ENCODE measurements at regions of chr22 and their contacts with region 1.

Region 1: DNA sequence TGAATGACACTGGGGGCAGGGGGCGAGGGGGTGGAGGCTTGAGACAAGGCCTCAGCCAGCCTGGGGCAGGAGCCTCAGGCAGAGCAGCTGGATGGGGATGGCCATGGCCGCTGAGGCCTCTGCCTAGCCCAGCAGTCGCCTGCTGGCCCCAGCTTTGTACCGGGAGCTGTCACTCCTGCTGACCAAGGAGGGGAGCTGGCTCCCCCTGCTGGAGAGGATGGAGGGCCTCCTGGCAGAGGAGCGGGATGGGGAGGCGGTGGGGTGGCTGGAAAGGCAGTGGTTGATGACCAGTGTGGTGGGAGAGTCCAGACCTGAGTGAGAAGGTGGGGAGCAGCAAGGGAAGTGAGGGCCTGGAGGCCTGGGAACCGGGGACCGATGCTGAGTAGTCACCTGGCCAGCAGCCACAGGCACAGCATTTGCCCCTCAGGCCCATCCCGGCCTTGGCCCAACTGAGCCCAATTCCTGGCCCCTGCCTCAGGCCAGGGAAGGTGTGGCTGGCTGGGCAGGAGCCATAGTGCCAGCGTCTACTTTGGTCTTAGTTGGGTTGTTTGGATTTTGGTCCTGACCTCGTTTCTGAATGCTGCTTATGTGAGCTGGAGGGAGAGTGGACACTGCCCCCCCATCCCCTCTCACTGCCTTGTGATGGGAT is 6.0 kb upstream of the SUSD2 start:
- DNase-seq: no peak
- ATAC-seq: peak; percentile 87
- H3K4me3 ChIP-seq: no peak overlapping the region
- H3K27ac ChIP-seq: no peak overlapping the region
- H3K4me1 ChIP-seq: no peaks in the 10 kb centered on the region
- H3K27me3 ChIP-seq: no peaks in the 10 kb centered on the region
- CTCF ChIP-seq: peak; percentile 72 to 92 (median 80)
- EP300 ChIP-seq: no peak
- POLR2A ChIP-seq: no peak
- RAD21 ChIP-seq: peak; percentile 89

Region 2: DNA sequence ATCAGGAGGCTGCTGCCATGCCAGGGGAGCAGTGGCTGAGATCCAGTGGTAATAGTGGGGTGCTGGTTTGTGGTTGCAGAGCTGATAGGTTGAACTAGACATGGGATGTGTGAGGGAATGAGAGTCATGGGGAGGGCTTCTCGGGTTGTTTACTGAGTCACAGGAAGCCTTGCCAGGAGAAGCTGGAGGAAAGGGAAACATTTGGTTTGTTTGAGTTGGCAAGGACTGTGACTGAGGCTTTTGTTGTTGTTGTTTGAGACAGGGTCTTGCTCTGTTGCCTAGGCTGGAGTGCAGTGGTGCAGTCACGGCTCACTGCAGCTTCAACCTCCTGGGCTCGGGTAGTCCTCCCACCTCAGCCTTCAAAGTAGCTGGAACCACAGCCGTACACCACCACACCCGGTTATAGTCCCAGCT is 114.9 kb before region 1 on chr22:
- CTCF ChIA-PET with region 1: interaction called, 4 read pairs
- POLR2A ChIA-PET with region 1: no interaction called
- RAD21 ChIA-PET with region 1: no interaction called
- SMC1A ChIA-PET with region 1: no interaction called
- in situ Hi-C with region 1: no loop called
- intact Hi-C with region 1: loop called (anchors 5 kb)
- DNase-seq: no peak
- ATAC-seq: no peak
- H3K4me3 ChIP-seq: no peak overlapping the region
- H3K27ac ChIP-seq: no peak overlapping the region
- H3K4me1 ChIP-seq: no peaks in the 10 kb centered on the region
- H3K27me3 ChIP-seq: no peaks in the 10 kb centered on the region
- CTCF ChIP-seq: no peak
- EP300 ChIP-seq: no peak
- POLR2A ChIP-seq: no peak
- RAD21 ChIP-seq: no peak

Region 3: DNA sequence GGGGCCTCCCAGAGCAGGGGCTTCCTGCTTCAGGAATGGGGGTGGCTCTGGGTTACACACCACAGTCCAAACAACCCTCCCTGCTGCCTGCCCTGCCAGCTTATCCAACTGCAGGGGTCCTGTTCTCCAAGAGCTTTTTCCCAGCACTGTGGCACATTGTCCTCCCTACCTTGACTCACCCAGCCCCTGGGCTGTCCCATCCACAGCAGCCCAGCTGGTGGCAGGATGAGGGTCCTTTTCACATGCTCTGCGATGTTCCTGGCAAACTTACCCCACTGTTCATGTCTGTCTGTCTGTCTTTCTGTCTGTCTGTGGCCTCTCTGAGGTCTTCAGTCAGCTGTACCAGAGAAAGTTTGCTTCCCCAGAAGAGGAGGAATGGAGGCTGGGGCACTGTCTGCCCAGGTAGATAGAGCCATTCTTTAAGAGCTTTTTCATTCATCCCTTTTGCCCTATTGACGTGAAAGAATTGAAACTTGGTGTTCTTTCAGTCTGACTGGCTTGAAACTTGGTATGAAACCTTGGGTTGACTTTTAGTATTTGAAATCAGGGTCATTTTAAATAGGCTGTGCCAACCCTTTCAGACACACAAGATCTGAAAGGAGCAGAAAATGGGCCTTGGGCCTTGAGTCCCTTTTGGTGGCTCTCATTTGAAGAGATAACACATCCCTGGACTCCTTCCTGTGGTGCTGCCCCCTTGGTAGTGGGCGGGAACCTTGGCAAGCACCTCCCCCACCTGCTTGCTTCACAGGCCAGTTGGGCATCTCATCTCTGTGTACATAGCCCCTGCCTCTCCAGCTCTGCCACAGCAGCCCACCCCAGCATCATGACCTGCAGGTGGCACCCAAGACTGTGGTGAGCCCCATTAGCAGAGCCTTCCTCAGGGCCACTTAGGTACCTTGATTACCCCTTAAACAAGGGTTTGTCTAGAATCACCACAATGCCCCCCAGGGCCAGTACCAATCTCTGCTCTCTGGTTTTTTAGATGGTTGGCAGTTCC is 68.6 kb before region 1 on chr22:
- CTCF ChIA-PET with region 1: interaction called, 16 read pairs
- POLR2A ChIA-PET with region 1: no interaction called
- RAD21 ChIA-PET with region 1: interaction called, 17 read pairs
- SMC1A ChIA-PET with region 1: interaction called, 11 read pairs
- in situ Hi-C with region 1: no loop called
- intact Hi-C with region 1: loop called (anchors 5 kb)
- DNase-seq: peak; percentile 41
- ATAC-seq: peak; percentile 90
- H3K4me3 ChIP-seq: no peak overlapping the region
- H3K27ac ChIP-seq: no peak overlapping the region; the same call in 1 of the 2 replicates
- H3K4me1 ChIP-seq: peaks cover 18% of the 10 kb centered on the region
- H3K27me3 ChIP-seq: no peaks in the 10 kb centered on the region
- CTCF ChIP-seq: peak; percentile 18 to 39 (median 37); a peak in 4 of 6 replicates
- EP300 ChIP-seq: no peak
- POLR2A ChIP-seq: no peak
- RAD21 ChIP-seq: peak; percentile 41

Region 4: DNA sequence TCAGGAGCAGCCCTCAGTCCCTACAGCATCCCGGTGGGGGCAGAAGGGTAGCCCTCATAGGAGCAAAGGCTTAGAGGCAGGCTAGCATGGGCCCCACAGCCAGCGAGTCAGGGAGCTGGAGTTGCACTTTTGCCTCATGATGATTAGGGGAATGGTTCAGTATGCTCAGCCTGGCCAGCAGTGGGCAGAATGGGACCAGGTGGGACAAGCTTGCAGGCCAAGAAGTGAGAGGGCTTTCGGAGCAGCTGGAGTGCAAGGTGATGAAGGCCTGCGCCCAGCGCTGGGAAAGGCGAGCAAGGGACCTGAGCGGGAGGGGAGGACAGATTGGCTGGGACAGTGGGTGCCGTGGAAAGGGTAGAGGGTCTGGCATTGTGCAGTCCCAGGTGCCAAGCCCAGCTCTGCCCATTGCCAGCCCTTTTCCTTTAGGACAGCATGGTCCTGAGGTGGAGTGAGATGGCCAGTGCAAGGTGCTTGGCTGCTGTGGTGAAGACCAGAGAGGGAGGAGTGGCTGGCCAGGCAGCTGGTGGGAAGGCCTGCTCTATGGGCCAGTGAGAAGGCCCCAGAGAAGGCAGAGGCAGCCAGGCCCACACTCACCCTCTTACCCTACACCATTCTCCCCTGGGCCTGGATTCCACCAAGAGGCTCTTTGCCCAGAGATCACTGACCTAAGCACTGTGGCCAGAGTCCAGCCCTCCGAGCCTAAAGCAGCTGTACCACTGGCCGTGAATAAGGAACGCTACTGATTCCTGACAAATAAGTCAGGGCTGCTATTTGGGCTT is 41.9 kb before region 1 on chr22:
- CTCF ChIA-PET with region 1: interaction called, 13 read pairs
- POLR2A ChIA-PET with region 1: no interaction called
- RAD21 ChIA-PET with region 1: interaction called, 4 read pairs
- SMC1A ChIA-PET with region 1: interaction called, 4 read pairs
- in situ Hi-C with region 1: no loop called
- intact Hi-C with region 1: loop called (anchors 2 kb)
- DNase-seq: no peak
- ATAC-seq: no peak; the same call in 2 of the 3 replicates
- H3K4me3 ChIP-seq: no peak overlapping the region
- H3K27ac ChIP-seq: no peak overlapping the region
- H3K4me1 ChIP-seq: no peaks in the 10 kb centered on the region; the same call in 1 of the 2 replicates
- H3K27me3 ChIP-seq: no peaks in the 10 kb centered on the region
- CTCF ChIP-seq: peak in 2 of 3 experiments; percentile 25 to 26; a peak in 2 of 6 replicates
- EP300 ChIP-seq: no peak
- POLR2A ChIP-seq: no peak
- RAD21 ChIP-seq: peak; percentile 47

Measured in GM12878 (cell line).